ENCODE measurements at regions of chr2 and their contacts with region 1.

Region 1: DNA sequence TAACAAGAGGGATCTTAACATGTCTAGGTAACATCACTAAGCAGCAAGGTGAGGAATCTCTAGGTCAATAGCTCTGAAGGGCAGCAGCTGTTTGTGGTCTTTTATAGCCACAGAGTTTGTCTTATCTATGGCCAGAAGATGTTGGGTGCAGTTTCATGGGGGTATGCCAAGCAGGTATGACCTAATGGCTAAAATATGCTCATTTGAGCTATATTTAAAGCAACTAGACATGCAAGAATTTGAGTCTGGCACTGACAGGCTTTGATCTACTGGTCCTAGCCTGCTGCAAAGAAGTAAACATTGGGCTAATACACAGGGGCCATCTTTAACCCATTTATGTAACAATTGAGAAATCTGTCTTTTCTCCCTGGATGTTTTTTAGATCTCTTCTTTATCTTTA is 13.9 kb upstream of the UGP2 start:
- DNase-seq: no peak
- H3K4me3 ChIP-seq: no peak overlapping the region
- H3K27ac ChIP-seq: no peak overlapping the region
- H3K4me1 ChIP-seq: no peaks in the 10 kb centered on the region
- H3K27me3 ChIP-seq: no peaks in the 10 kb centered on the region
- CTCF ChIP-seq: no peak

Region 2: DNA sequence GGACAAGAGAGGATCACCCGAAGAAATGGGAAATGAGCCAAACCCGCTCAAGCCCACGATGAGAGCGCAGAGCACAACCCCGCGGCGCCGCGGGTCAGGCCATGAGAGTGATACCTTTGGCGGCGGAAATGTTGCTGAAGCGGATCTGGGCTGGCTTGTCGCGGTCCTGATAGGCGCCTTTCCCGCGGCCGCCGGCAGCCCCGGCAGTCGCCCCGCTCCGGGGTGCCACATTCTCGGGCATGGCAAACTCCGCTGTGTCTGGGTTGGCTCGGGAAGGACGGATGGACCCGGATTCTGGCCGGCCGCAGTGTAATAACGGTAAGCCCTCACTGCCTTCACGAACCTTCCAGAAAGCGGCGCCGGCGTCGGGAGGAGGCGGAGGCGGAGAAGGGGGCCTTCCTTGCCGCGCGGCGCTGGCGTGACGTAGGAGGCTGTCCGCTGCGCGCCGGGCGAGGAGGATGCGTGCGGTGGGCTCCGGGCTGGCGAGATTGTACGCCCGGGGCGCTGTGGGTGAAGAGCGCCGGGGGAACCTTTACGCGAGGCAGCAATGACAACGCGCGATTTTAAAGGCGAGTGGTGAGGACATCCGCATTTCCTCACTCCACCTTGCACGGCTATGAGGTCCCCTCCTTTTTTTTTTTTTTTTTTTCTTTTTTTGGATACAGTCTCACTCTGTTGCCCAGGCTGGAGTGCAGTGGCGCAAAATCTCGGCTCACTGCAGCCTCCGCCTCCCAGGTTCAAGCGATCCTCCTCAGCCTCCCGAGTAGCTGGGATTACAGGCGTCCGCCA is 1939.3 kb before region 1 on chr2 and contains the start of gene CCT4:
- CTCF ChIA-PET with region 1: no interaction called
- POLR2A ChIA-PET with region 1: interaction called, 16 read pairs
- intact Hi-C with region 1: no loop called
- DNase-seq: peak; percentile 93
- H3K4me3 ChIP-seq: peak within 1 kb of the TSS; percentile 87
- H3K27ac ChIP-seq: peak within 1 kb of the TSS; percentile 90
- H3K4me1 ChIP-seq: peaks cover 9% of the 10 kb centered on the region
- H3K27me3 ChIP-seq: no peaks in the 10 kb centered on the region
- CTCF ChIP-seq: no peak
- total RNA-seq, gene CCT4: 329 and 348 TPM in 2 replicates

Region 3: DNA sequence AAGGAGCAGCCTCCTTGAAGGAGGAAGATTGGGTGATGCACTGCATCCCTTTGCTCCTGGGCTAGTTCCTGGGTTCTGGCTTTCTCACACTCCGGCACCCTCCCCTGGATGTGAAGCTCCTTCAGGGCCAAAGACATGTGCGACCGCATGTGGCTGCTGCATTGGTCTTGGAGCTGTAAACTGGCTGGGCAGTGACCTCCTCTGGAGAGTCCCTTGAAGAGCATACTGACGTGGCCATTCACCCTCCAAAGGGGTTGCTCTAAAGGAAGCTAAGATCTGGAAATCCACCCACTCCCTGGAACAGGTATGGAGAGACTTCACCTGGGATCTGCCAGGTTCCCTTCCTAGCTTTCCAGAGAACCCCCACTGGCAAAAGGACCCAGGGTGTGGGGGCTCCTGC is 1383.9 kb before region 1 on chr2:
- CTCF ChIA-PET with region 1: no interaction called
- POLR2A ChIA-PET with region 1: no interaction called
- intact Hi-C with region 1: no loop called
- DNase-seq: no peak
- H3K4me3 ChIP-seq: no peak overlapping the region
- H3K27ac ChIP-seq: no peak overlapping the region
- H3K4me1 ChIP-seq: no peaks in the 10 kb centered on the region
- H3K27me3 ChIP-seq: peaks cover 4% of the 10 kb centered on the region
- CTCF ChIP-seq: no peak